ENCODE measurements at regions of chr5 and their contacts with region 1.

Region 1: GRCh38 chr5:149852641-149853330 is 91.8 kb downstream of the PDE6A start:
- DNase-seq: peak; percentile 56 to 78
- ATAC-seq: peak; percentile 45 to 60
- H3K4me3 ChIP-seq: no peak overlapping the region
- H3K27ac ChIP-seq: peak overlapping the region; percentile 44 to 92 (median 52)
- H3K4me1 ChIP-seq: peaks cover 17 to 22% of the 10 kb centered on the region in 2 donors
- H3K27me3 ChIP-seq: no peaks in the 10 kb centered on the region
- CTCF ChIP-seq: peak; percentile 85 to 93 (median 90)
- POLR2A ChIP-seq: no peak

Region 2: GRCh38 chr5:148343046-148343408 is 1509.8 kb before region 1 on chr5:
- in situ Hi-C with region 1: no loop called
- intact Hi-C with region 1: no loop called
- DNase-seq: no peak
- ATAC-seq: no peak
- H3K4me3 ChIP-seq: no peak overlapping the region
- H3K27ac ChIP-seq: no peak overlapping the region
- H3K4me1 ChIP-seq: no peaks in the 10 kb centered on the region
- H3K27me3 ChIP-seq: no peaks in the 10 kb centered on the region
- CTCF ChIP-seq: no peak
- POLR2A ChIP-seq: no peak

Region 3: GRCh38 chr5:149636851-149637246 is 215.9 kb before region 1 on chr5:
- in situ Hi-C with region 1: loop called in 3 of 4 experiments (anchors 5 to 10 kb)
- intact Hi-C with region 1: loop called (anchors 1 kb)
- DNase-seq: peak in 1 of 2 donors; percentile 49
- ATAC-seq: peak; percentile 32 to 40
- H3K4me3 ChIP-seq: no peak overlapping the region
- H3K27ac ChIP-seq: no peak overlapping the region
- H3K4me1 ChIP-seq: peaks cover 21 to 26% of the 10 kb centered on the region in 2 donors
- H3K27me3 ChIP-seq: no peaks in the 10 kb centered on the region
- CTCF ChIP-seq: peak; percentile 70 to 93 (median 89)
- POLR2A ChIP-seq: no peak

Region 4: GRCh38 chr5:149731639-149732323 is 121.0 kb before region 1 on chr5:
- in situ Hi-C with region 1: no loop called
- intact Hi-C with region 1: loop called (anchors 1 kb)
- DNase-seq: peak; percentile 96
- ATAC-seq: peak; percentile 64 to 68
- H3K4me3 ChIP-seq: peak overlapping the region; percentile 86 to 98 (median 94)
- H3K27ac ChIP-seq: peak overlapping the region; percentile 98 to 99 (median 99)
- H3K4me1 ChIP-seq: peaks cover 18 to 30% of the 10 kb centered on the region in 2 donors
- H3K27me3 ChIP-seq: no peaks in the 10 kb centered on the region
- CTCF ChIP-seq: peak in 1 of 5 experiments; percentile 14
- POLR2A ChIP-seq: peak; percentile 82 to 89

Region 5: GRCh38 chr5:149828161-149828884 is 24.5 kb before region 1 on chr5:
- in situ Hi-C with region 1: no loop called
- intact Hi-C with region 1: loop called (anchors 1 kb)
- DNase-seq: peak; percentile 70 to 91
- ATAC-seq: peak; percentile 80 to 89
- H3K4me3 ChIP-seq: no peak overlapping the region
- H3K27ac ChIP-seq: peak overlapping the region; percentile 74 to 84 (median 79)
- H3K4me1 ChIP-seq: peaks cover 42 to 43% of the 10 kb centered on the region in 2 donors
- H3K27me3 ChIP-seq: no peaks in the 10 kb centered on the region
- CTCF ChIP-seq: peak; percentile 89 to 94 (median 92)
- POLR2A ChIP-seq: no peak

Region 6: GRCh38 chr5:149902177-149902576 is 49.4 kb after region 1 on chr5:
- in situ Hi-C with region 1: no loop called
- intact Hi-C with region 1: no loop called
- DNase-seq: no peak
- ATAC-seq: no peak
- H3K4me3 ChIP-seq: no peak overlapping the region
- H3K27ac ChIP-seq: no peak overlapping the region
- H3K4me1 ChIP-seq: peaks cover 10% of the 10 kb centered on the region in 2 donors
- H3K27me3 ChIP-seq: no peaks in the 10 kb centered on the region
- CTCF ChIP-seq: no peak
- POLR2A ChIP-seq: no peak

Region 7: GRCh38 chr5:149915392-149916260 is 62.8 kb after region 1 on chr5:
- in situ Hi-C with region 1: no loop called
- intact Hi-C with region 1: loop called (anchors 5 kb)
- DNase-seq: peak in 1 of 2 donors; percentile 40
- ATAC-seq: peak; percentile 84 to 85
- H3K4me3 ChIP-seq: no peak overlapping the region
- H3K27ac ChIP-seq: peak overlapping the region; percentile 47 to 82 (median 76)
- H3K4me1 ChIP-seq: peaks cover 18 to 25% of the 10 kb centered on the region in 2 donors
- H3K27me3 ChIP-seq: no peaks in the 10 kb centered on the region
- CTCF ChIP-seq: no peak
- POLR2A ChIP-seq: no peak

Region 8: DNA sequence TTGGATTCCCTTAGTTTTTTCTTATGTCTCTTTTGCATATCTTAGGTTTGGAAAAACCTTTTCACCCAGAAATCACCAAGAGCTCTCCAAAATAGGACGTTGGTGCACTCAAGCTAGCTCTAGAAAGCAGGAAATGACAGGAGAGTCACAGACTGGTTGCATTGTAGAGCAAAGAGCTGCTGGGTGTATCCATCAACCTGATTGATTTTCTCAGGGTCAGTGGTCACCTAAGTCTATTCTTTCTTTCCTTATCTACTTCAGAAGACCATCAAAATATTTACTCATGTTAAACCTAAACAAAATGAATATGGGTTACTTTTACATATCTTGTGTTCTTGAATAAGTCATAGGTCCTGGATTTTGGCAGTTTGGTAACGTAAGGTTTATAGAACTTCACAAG is 122.6 kb after region 1 on chr5:
- in situ Hi-C with region 1: no loop called
- intact Hi-C with region 1: no loop called
- DNase-seq: no peak
- ATAC-seq: no peak
- H3K4me3 ChIP-seq: no peak overlapping the region
- H3K27ac ChIP-seq: no peak overlapping the region
- H3K4me1 ChIP-seq: no peaks in the 10 kb centered on the region
- H3K27me3 ChIP-seq: no peaks in the 10 kb centered on the region
- CTCF ChIP-seq: no peak
- POLR2A ChIP-seq: no peak

Region 9: DNA sequence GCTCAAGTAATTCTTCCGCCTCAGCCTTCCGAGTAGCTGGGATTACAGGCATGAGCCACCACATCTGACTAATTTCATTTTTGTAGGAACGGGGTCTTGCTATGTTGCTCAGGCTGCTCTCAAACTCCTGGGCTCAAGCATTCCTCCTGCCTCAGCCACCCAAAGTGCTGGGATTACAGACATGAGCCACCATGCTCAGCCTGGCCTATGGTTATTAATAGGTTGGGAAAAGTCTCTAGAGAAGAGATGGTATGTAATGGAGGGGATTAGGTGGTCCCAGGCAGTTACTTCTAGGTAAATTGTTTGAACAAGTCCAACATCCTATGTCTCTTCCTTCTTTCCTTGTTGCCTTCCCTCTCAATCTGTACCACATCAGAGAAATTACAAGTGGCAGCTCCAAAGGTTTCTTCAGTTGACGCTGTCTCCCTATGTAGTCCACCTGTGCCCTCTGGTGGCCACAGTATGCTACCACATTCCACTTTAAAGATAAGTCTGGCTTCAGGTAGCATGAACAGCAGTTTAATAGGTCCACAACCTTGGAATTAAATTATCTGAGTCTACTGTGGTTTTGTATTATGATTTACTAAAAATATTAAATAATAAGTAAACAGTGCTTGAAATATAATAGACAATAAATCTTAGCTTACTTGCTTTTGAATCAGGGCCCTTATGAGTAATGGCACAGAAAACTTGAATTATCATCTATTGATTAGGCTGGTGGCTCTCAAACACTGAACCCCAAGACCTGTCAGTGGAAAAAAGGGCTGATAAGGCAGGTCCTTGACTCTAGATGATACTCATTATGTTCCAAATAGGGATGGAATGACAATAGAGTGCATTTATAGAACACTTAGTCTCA is 138.0 kb after region 1 on chr5:
- in situ Hi-C with region 1: loop called in 1 of 4 experiments (anchors 5 kb)
- intact Hi-C with region 1: loop called (anchors 5 kb)
- DNase-seq: peak; percentile 32 to 75
- ATAC-seq: peak; percentile 84 to 94
- H3K4me3 ChIP-seq: no peak overlapping the region
- H3K27ac ChIP-seq: no peak overlapping the region
- H3K4me1 ChIP-seq: peaks cover 19 to 27% of the 10 kb centered on the region in 2 donors
- H3K27me3 ChIP-seq: no peaks in the 10 kb centered on the region
- CTCF ChIP-seq: peak; percentile 87 to 96 (median 91)
- POLR2A ChIP-seq: no peak

Region 10: DNA sequence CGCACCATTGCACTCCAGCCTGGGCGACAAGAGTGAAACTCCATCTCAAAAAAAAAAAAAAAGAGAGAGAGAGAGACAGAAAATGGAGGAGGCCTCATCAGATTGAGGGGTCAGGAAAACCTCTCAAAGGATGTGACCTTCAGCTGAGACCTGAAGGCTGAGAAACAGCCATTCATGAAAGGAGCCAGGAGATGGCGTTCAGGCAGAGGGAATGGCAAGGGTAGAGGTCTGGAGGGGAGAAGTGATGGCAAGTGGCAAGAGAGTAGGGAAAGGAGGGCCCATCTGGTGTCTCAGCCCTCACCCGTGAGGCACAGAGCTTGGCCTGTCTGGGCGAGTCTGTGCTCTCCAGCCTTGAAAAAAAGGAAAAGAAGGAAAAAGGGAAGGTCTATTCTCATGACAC is 419.7 kb after region 1 on chr5:
- in situ Hi-C with region 1: no loop called
- intact Hi-C with region 1: no loop called
- DNase-seq: no peak
- ATAC-seq: no peak
- H3K4me3 ChIP-seq: no peak overlapping the region
- H3K27ac ChIP-seq: no peak overlapping the region
- H3K4me1 ChIP-seq: peaks cover 13 to 15% of the 10 kb centered on the region in 2 donors
- H3K27me3 ChIP-seq: no peaks in the 10 kb centered on the region
- CTCF ChIP-seq: peak in 1 of 5 experiments; percentile 18
- POLR2A ChIP-seq: no peak